ENCODE measurements at regions of chr14 and their contacts with region 1.

Region 1: GRCh38 chr14:105351920-105352851 is 37.6 kb downstream of the PACS2 start:
- DNase-seq: peak; percentile 83 to 89 (median 88)
- ATAC-seq: peak; percentile 83 to 85
- H3K4me3 ChIP-seq: no peak overlapping the region
- H3K27ac ChIP-seq: no peak overlapping the region
- H3K4me1 ChIP-seq: no peaks in the 10 kb centered on the region
- H3K27me3 ChIP-seq: no peaks in the 10 kb centered on the region

Region 2: DNA sequence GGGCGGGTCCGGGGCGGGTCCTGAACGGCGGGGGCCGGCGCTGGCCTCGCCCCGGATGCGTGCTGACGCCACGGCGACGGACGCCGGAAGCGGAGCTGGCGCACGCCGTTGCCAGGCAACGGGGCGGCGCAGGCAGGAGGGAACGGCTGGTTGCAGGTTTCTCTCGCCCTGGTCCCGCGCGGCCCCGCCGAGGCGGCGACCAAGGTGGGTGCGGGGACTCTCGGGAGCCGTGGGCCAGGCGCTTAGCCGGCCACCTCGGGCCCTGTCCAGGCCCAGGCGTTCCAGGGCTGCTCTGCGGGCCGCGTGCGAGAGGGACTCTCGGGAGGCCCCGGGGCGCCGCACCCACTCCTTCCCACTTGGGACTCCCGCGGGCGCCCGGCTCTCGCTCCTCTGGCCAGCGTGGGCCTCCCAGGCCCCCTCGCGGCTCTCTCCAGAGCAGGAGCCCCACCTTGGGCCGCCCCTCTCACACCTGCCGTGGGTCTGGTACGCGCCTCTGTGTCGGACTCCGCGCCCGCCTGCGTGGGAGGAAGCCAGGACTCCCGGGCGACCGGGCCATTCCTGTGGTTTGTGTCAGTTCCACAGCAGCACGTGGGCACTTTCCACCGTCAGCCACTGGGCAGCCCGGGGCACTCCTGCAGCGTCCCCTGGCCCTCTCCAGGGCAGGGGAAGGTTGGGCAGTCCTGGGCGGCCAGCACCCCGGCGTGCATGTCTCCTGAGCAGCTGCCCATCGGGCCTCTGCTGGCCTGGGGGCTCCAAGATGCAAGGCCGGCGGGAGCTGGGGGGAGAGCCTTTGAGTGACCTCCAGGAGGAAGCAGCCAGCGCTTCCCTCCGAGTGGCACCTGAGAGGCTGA is 366.3 kb before region 1 on chr14 and contains the start of gene CLBA1:
- intact Hi-C with region 1: loop called in 1 of 4 experiments (anchors 10 kb)
- DNase-seq: peak; percentile 91 to 96 (median 96)
- ATAC-seq: peak; percentile 96
- H3K4me3 ChIP-seq: peak within 1 kb of the TSS; percentile 63
- H3K27ac ChIP-seq: no peak within 1 kb of the TSS
- H3K4me1 ChIP-seq: peaks cover 2% of the 10 kb centered on the region
- H3K27me3 ChIP-seq: no peaks in the 10 kb centered on the region
- total RNA-seq, gene CLBA1: 1.8 to 4.2 (median 3.1) TPM

Region 3: GRCh38 chr14:105290621-105291346 is 61.4 kb before region 1 on chr14:
- intact Hi-C with region 1: no loop called
- DNase-seq: peak in 1 of 3 donors; percentile 46
- ATAC-seq: no peak
- H3K4me3 ChIP-seq: no peak overlapping the region
- H3K27ac ChIP-seq: no peak overlapping the region
- H3K4me1 ChIP-seq: peaks cover 7% of the 10 kb centered on the region
- H3K27me3 ChIP-seq: no peaks in the 10 kb centered on the region

Measured in right cardiac atrium (tissue), 5 donors.